CD4-positive, alpha-beta memory T cell (primary cell): ENCODE measurements at regions of chr19 and their contacts with region 1.

Region 1: GRCh38 chr19:48872182-48872883 is at the start of gene PPP1R15A:
- DNase-seq: peak; percentile 97 to 99 (median 98)
- H3K4me3 ChIP-seq: peak within 1 kb of the TSS; percentile 52 to 99
- H3K4me3 Mint-ChIP-seq: peak within 1 kb of the TSS; percentile 95 to 100 (median 99)
- H3K27ac ChIP-seq: peak within 1 kb of the TSS; percentile 100
- H3K27ac Mint-ChIP-seq: peak within 1 kb of the TSS; percentile 99 to 100 (median 100)
- H3K4me1 ChIP-seq: peaks cover 34% of the 10 kb centered on the region
- H3K4me1 Mint-ChIP-seq: peaks cover 27 to 48% (median 34%) of the 10 kb centered on the region in 4 donors
- H3K27me3 ChIP-seq: no peaks in the 10 kb centered on the region
- H3K27me3 Mint-ChIP-seq: peaks cover 0 to 6% of the 10 kb centered on the region in 2 donors
- total RNA-seq, gene PPP1R15A: 67.0 to 69.8 TPM

Region 2: DNA sequence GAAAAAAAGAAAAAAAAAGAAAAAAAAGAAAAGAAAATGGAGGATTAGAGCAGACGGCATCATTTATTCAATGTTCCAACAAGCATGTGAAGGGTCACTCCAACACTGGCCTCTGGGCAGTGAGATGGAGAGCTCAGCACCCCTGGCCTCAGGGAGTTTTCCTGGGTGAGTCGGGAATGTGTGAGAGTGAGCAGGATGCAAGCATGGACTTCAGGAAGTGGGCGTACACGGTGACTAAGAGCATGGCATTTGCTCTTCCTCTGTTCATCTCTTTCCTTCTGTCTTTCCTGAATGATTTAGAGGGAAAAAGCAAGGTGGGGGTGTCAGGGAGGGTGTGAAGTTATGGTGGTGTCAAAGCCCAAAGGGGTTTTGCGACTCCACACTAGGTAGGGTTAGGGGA is 827.8 kb before region 1 on chr19:
- CTCF ChIA-PET with region 1: no interaction called
- POLR2A ChIA-PET with region 1: no interaction called
- intact Hi-C with region 1: no loop called
- DNase-seq: no peak
- H3K4me3 ChIP-seq: no peak overlapping the region
- H3K4me3 Mint-ChIP-seq: no peak overlapping the region
- H3K27ac ChIP-seq: no peak overlapping the region
- H3K27ac Mint-ChIP-seq: no peak overlapping the region
- H3K4me1 ChIP-seq: no peaks in the 10 kb centered on the region
- H3K4me1 Mint-ChIP-seq: no peaks in the 10 kb centered on the region
- H3K27me3 ChIP-seq: peaks cover 3% of the 10 kb centered on the region
- H3K27me3 Mint-ChIP-seq: peaks cover 15 to 25% of the 10 kb centered on the region in 2 donors

Region 3: DNA sequence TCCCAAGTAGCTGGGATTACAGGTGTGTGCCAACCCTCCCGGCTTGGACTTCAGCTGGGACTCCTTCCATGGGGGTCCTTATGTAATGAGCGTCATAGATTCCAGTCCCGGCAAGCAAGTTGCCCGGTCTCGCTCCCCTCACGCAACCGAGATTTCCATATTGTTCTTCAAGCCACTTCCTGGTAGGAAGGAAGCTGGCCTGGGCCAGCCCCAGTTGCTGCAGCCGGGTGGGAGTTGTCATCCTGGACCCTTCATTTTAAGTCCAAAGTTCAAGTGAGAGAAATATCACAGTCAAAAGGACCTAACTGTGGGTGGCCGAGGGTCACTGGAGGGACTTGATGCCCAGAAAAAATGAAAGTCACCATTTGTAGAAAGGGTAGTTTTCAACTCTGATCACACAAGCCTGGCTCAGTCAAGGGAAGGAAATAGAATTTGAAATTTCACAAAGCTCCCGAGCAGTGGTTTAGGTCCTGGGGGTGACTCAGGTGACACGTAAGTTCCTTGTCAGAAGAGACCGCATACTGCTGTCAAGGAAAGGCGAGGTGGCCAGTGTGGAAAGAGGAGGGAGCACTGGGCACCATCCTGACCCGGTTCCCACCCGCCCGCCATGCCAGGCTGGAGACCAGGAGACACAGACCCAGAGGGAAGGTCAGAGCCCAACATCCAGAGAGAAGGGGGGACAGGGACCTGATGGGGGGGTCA is 111.7 kb before region 1 on chr19:
- CTCF ChIA-PET with region 1: no interaction called
- POLR2A ChIA-PET with region 1: no interaction called
- intact Hi-C with region 1: no loop called
- DNase-seq: no peak
- H3K4me3 ChIP-seq: no peak overlapping the region
- H3K4me3 Mint-ChIP-seq: no peak overlapping the region
- H3K27ac ChIP-seq: no peak overlapping the region
- H3K27ac Mint-ChIP-seq: peak overlapping the region in 1 of 7 donors; percentile 17
- H3K4me1 ChIP-seq: peaks cover 5% of the 10 kb centered on the region
- H3K4me1 Mint-ChIP-seq: peaks cover 0 to 5% (median 3%) of the 10 kb centered on the region in 4 donors
- H3K27me3 ChIP-seq: no peaks in the 10 kb centered on the region
- H3K27me3 Mint-ChIP-seq: peaks cover 7 to 10% of the 10 kb centered on the region in 2 donors

Region 4: DNA sequence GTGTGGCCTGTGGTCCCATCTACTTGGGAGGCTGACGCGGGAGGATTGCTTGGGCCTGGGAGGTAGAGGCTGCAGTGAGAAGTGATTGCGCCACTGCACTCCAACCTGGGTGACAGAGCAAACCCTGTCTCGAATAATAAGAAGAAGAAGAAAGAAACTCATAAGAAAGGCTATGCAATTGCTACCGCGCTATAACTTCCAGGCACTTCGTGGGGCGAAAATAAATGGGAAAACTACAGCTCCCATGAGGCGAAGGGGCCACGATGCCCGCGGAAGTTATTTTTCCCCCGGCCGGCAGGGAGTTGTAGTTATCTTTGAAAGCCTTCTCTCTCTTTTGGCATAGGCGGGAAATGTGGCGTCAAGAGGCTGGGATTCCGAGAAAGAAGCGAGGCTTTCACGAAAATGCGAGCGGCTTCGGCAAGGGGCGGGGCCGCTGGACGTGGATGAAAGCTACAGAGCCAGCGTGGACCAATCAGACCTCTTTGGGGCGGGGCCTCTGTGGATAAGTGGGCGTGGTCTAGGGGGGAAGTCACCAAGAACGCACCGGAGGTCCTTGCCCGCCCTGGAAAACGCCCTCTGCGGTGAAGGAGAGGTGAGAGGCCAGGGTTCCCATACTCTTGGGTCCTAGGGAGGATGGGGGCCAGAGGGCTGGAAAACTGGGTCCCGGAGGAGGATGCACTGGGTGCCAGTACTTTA is 27.6 kb after region 1 on chr19 and contains the start of gene NUCB1:
- CTCF ChIA-PET with region 1: interaction called, 5 read pairs
- POLR2A ChIA-PET with region 1: interaction called, 78 read pairs
- intact Hi-C with region 1: loop called (anchors 1 kb)
- DNase-seq: peak; percentile 97 to 99 (median 97)
- H3K4me3 ChIP-seq: peak within 1 kb of the TSS; percentile 73 to 85
- H3K4me3 Mint-ChIP-seq: peak within 1 kb of the TSS; percentile 92 to 99 (median 98)
- H3K27ac ChIP-seq: peak within 1 kb of the TSS; percentile 81
- H3K27ac Mint-ChIP-seq: peak within 1 kb of the TSS; percentile 88 to 97 (median 95)
- H3K4me1 ChIP-seq: peaks cover 30% of the 10 kb centered on the region
- H3K4me1 Mint-ChIP-seq: peaks cover 18 to 49% (median 29%) of the 10 kb centered on the region in 4 donors
- H3K27me3 ChIP-seq: peaks cover 4% of the 10 kb centered on the region
- H3K27me3 Mint-ChIP-seq: peaks cover under 1 to 2% of the 10 kb centered on the region in 2 donors
- total RNA-seq, gene NUCB1: 132 to 145 TPM

Region 5: GRCh38 chr19:48954595-48955310 is 82.4 kb after region 1 on chr19 and contains the start of gene BAX:
- CTCF ChIA-PET with region 1: no interaction called
- POLR2A ChIA-PET with region 1: interaction called, 22 read pairs
- intact Hi-C with region 1: no loop called
- DNase-seq: peak; percentile 69 to 81 (median 74)
- H3K4me3 ChIP-seq: peak within 1 kb of the TSS; percentile 76 to 87
- H3K4me3 Mint-ChIP-seq: peak within 1 kb of the TSS; percentile 79 to 94 (median 90)
- H3K27ac ChIP-seq: peak within 1 kb of the TSS; percentile 86
- H3K27ac Mint-ChIP-seq: peak within 1 kb of the TSS; percentile 77 to 92 (median 86)
- H3K4me1 ChIP-seq: peaks cover 23% of the 10 kb centered on the region
- H3K4me1 Mint-ChIP-seq: peaks cover 12 to 34% (median 27%) of the 10 kb centered on the region in 4 donors
- H3K27me3 ChIP-seq: no peaks in the 10 kb centered on the region
- H3K27me3 Mint-ChIP-seq: no peaks in the 10 kb centered on the region
- total RNA-seq, gene BAX: 173 to 183 TPM

Region 6: DNA sequence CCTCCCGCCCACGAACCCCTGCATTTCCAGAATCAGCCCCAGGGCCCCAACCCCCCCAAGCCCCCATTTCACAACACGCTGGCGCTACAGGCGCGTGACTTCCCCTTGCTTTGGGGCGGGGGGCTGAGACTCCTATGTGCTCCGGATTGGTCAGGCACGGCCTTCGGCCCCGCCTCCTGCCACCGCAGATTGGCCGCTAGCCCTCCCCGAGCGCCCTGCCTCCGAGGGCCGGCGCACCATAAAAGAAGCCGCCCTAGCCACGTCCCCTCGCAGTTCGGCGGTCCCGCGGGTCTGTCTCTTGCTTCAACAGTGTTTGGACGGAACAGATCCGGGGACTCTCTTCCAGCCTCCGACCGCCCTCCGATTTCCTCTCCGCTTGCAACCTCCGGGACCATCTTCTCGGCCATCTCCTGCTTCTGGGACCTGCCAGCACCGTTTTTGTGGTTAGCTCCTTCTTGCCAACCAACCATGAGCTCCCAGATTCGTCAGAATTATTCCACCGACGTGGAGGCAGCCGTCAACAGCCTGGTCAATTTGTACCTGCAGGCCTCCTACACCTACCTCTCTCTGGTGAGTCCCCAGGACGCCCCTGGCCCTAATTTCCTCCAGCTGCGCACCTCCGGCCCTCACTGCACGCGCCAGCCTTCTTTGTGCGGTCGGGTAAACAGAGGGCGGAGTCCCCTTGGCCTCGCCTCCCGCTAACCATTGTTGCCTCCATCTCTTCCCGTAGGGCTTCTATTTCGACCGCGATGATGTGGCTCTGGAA is 92.9 kb after region 1 on chr19 and contains the start of gene FTL:
- CTCF ChIA-PET with region 1: interaction called, 18 read pairs
- POLR2A ChIA-PET with region 1: interaction called, 134 read pairs
- intact Hi-C with region 1: loop called (anchors 1 kb)
- DNase-seq: peak; percentile 81 to 87 (median 85)
- H3K4me3 ChIP-seq: peak within 1 kb of the TSS; percentile 84 to 91
- H3K4me3 Mint-ChIP-seq: peak within 1 kb of the TSS; percentile 93 to 100 (median 96)
- H3K27ac ChIP-seq: peak within 1 kb of the TSS; percentile 64
- H3K27ac Mint-ChIP-seq: peak within 1 kb of the TSS; percentile 96 to 100 (median 97)
- H3K4me1 ChIP-seq: peaks cover 43% of the 10 kb centered on the region
- H3K4me1 Mint-ChIP-seq: peaks cover 30 to 67% (median 46%) of the 10 kb centered on the region in 4 donors
- H3K27me3 ChIP-seq: no peaks in the 10 kb centered on the region
- H3K27me3 Mint-ChIP-seq: no peaks in the 10 kb centered on the region
- total RNA-seq, gene FTL: 1,304 to 1,371 TPM